Dendritic cell treated with granulocyte-macrophage colony-stimulating factor and Interleukin-4, amounts not matched to agents 40 ng/mL and 50 ng/mL, for 4 days (primary cell): ENCODE measurements at regions of chr4 and their contacts with region 1.

Region 1: GRCh38 chr4:26028793-26029567 is 115.0 kb downstream of the SMIM20 start:
- H3K4me3 Mint-ChIP-seq: peak overlapping the region; percentile 44
- H3K27ac Mint-ChIP-seq: peak overlapping the region; percentile 67
- H3K4me1 Mint-ChIP-seq: peaks cover 66% of the 10 kb centered on the region
- H3K27me3 Mint-ChIP-seq: peaks cover 2% of the 10 kb centered on the region

Region 2: DNA sequence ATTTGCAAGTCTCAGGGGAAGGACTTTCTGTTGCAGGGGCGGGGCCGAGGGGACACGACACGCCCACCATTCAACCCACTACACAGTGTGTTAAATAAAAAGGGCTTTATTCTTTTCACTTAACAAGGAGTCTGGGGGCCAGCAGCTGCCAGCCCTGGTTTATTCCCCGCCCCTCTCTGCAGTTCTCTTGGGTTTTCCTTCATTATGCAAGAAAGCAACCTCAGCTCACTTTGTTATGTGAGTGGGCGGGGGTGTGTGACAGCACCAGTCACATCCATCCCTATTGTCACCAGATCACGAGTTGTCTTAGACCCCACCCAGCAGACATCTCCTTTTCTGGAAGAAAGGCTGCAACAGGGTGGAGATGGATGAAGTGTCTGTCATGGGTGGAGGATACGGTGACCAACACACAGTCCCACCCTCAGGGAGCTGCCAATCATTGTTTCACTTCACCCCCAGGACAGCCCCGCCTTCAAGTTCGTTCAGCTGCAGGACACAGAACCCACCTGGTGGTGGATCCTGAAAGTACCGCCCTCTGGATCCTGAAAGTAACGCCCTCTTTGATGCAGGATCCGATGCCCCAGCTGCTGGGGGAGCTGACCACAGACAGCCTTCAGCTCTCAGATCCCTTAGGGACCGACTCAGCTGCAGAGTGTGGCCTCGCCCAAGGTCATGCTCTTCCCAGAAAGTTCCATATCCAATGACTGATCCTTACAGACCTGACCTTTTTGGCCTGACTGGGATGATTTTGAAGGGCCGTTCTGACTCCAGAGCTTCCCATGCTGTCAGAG is 35.4 kb before region 1 on chr4:
- intact Hi-C with region 1: loop called (anchors 2 kb)
- H3K4me3 Mint-ChIP-seq: no peak overlapping the region
- H3K27ac Mint-ChIP-seq: peak overlapping the region; percentile 76
- H3K4me1 Mint-ChIP-seq: peaks cover 68% of the 10 kb centered on the region
- H3K27me3 Mint-ChIP-seq: peaks cover 2% of the 10 kb centered on the region

Region 3: DNA sequence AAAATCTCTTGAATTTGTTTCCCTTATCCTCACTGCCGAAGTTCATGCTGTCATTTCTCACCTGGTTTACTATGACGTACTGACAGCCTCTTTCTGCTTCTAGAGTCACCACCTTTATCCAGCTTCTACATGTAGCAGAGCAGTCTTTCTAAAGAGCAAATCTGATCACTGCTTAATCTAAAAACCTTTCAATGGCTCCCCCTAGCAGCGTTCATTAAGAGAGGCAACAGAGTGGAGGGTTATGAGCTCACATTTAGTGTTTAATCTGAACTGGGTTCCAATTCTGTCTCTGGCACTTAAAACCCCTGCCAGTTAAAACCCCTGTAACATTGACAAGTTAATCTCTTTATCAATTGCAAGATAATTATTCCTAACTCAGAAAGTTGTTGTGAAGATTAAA is 296.2 kb after region 1 on chr4:
- intact Hi-C with region 1: loop called (anchors 1 kb)
- H3K4me3 Mint-ChIP-seq: peak overlapping the region; percentile 76
- H3K27ac Mint-ChIP-seq: peak overlapping the region; percentile 98
- H3K4me1 Mint-ChIP-seq: peaks cover 60% of the 10 kb centered on the region
- H3K27me3 Mint-ChIP-seq: no peaks in the 10 kb centered on the region

Region 4: GRCh38 chr4:26404743-26405206 is 375.8 kb after region 1 on chr4:
- intact Hi-C with region 1: loop called (anchors 5 kb)
- H3K4me3 Mint-ChIP-seq: no peak overlapping the region
- H3K27ac Mint-ChIP-seq: no peak overlapping the region
- H3K4me1 Mint-ChIP-seq: peaks cover 28% of the 10 kb centered on the region
- H3K27me3 Mint-ChIP-seq: no peaks in the 10 kb centered on the region